ENCODE measurements at regions of chr4 and their contacts with region 1.

Region 1: GRCh38 chr4:119794704-119795103 is 166.1 kb upstream of the PDE5A start:
- DNase-seq: no peak
- H3K4me3 ChIP-seq: no peak overlapping the region
- H3K27ac ChIP-seq: no peak overlapping the region
- H3K4me1 ChIP-seq: no peaks in the 10 kb centered on the region
- H3K27me3 ChIP-seq: no peaks in the 10 kb centered on the region
- CTCF ChIP-seq: no peak

Region 2: GRCh38 chr4:119025916-119026661 is 768.6 kb before region 1 on chr4:
- intact Hi-C with region 1: no loop called
- DNase-seq: peak; percentile 64 to 78
- H3K4me3 ChIP-seq: peak overlapping the region; percentile 55
- H3K27ac ChIP-seq: peak overlapping the region; percentile 86 to 91
- H3K4me1 ChIP-seq: peaks cover 0 to 75% (median 13%) of the 10 kb centered on the region in 4 donors
- H3K27me3 ChIP-seq: no peaks in the 10 kb centered on the region
- CTCF ChIP-seq: no peak

Region 3: DNA sequence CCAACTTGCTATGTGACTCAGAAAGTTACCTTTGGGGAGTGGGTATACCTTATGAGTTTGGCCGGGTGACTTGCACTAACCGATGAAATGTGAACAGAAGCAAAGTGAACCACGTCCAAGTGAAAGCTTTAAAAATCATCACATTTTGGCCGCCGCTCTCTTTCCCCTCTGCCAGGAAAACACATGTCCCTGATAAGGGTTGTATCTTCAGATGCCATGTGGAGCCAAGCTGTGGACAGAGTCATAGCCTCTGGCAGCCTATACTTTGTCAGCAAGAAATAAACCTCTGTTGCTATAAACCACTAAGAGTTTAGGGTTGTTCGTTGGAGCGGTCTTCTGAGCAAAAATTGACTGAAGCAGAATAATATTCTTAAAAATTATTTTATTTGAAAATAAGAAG is 1035.5 kb after region 1 on chr4:
- intact Hi-C with region 1: loop called (anchors 5 kb)
- DNase-seq: no peak
- H3K4me3 ChIP-seq: no peak overlapping the region
- H3K27ac ChIP-seq: no peak overlapping the region
- H3K4me1 ChIP-seq: no peaks in the 10 kb centered on the region
- H3K27me3 ChIP-seq: no peaks in the 10 kb centered on the region
- CTCF ChIP-seq: no peak